Activated T-helper 2 cell treated with anti-CD3 and anti-CD28 coated beads, Interferon-gamma antibody, Interleukin-2, Interleukin-4, amounts not matched to agents 10 μg/mL and 5 μg/mL and 100 μg/mL, durations not matched to agents 14 hours and 24 hours and 36 hours (primary cell): ENCODE measurements at regions of chr2 and their contacts with region 1.

Region 1: GRCh38 chr2:70919672-70920366 is 15.9 kb upstream of the ATP6V1B1 start:
- DNase-seq: peak; percentile 51
- H3K4me3 Mint-ChIP-seq: no peak overlapping the region
- H3K27ac Mint-ChIP-seq: no peak overlapping the region
- H3K4me1 Mint-ChIP-seq: no peaks in the 10 kb centered on the region
- H3K27me3 Mint-ChIP-seq: peaks cover 14% of the 10 kb centered on the region

Region 2: DNA sequence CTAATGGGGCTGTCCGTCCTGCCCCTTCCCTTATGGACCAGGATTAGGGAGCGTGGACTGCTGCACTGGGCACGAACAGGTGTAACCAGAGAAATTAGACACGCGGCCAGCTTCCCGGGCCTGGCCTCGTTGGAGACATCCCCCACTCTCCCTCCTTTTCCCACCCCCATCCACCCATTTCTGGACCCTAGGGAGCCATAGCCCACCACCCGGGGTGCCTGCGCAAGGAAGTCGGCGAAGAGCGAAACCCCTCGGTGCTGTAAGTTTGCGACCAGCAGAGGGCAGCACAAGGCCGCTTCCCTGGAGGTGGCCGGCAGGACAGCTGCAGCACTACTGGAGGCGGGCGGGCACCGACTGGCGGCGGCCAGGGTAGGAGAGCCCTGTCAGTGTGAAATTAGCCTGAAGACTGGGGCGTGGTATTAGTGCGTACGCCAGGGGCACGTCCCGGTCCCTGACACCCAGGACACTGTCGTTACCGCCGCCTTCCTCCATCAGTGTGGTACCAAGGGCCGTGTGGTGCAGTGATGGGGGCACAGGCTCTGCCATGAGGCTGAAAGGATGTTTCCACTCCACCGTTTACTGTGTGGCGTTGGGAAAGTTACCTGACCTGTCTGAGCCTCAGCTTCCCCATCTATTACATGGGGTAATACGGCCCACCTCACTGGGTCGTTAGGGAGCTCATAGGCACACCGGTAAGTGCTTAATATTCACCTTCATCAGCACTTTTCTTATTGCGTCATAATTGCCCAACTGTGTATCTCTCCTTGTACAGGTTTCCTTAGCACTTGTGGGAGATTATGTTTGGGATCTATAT is 48.2 kb before region 1 on chr2:
- intact Hi-C with region 1: loop called (anchors 1 kb)
- DNase-seq: peak; percentile 68
- H3K4me3 Mint-ChIP-seq: no peak overlapping the region
- H3K27ac Mint-ChIP-seq: no peak overlapping the region
- H3K4me1 Mint-ChIP-seq: no peaks in the 10 kb centered on the region
- H3K27me3 Mint-ChIP-seq: peaks cover 28% of the 10 kb centered on the region